ENCODE measurements at regions of chr7 and their contacts with region 1.

Region 1: GRCh38 chr7:116258734-116259133 is 48.4 kb downstream of the TES start:
- DNase-seq: no peak
- H3K4me3 ChIP-seq: no peak overlapping the region
- H3K27ac ChIP-seq: peak overlapping the region; percentile 48
- H3K4me1 ChIP-seq: peaks cover 5% of the 10 kb centered on the region
- H3K27me3 ChIP-seq: no peaks in the 10 kb centered on the region
- CTCF ChIP-seq: peak; percentile 78 to 92 (median 86)
- POLR2A ChIP-seq: no peak

Region 2: DNA sequence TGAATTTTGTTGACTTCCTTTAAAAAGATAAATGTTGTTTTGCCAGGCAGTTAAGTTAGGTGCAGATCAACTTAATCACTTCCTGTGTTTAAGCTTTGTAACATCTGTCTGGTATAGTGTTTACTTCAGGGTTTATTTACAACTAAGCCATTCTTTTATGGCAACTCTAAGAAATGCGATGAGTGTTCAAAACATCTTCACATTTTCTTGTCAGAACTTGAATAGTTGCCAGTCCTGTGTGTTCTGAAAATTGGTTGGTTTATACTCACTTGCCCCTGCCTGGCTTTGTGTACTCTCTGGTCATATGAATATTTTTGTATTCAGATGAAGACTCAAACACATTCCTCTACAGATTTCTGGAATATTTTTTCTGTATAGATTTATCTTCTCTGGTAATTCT is 1009.7 kb before region 1 on chr7:
- intact Hi-C with region 1: loop called (anchors 10 kb)
- DNase-seq: no peak
- H3K4me3 ChIP-seq: no peak overlapping the region
- H3K27ac ChIP-seq: no peak overlapping the region
- H3K4me1 ChIP-seq: no peaks in the 10 kb centered on the region
- H3K27me3 ChIP-seq: no peaks in the 10 kb centered on the region
- CTCF ChIP-seq: no peak
- POLR2A ChIP-seq: no peak

Region 3: GRCh38 chr7:116588641-116589594 is 330.2 kb after region 1 on chr7:
- intact Hi-C with region 1: loop called (anchors 5 kb)
- DNase-seq: no peak
- H3K4me3 ChIP-seq: no peak overlapping the region
- H3K27ac ChIP-seq: peak overlapping the region; percentile 8
- H3K4me1 ChIP-seq: peaks cover 29% of the 10 kb centered on the region
- H3K27me3 ChIP-seq: no peaks in the 10 kb centered on the region
- CTCF ChIP-seq: peak; percentile 43 to 79 (median 66)
- POLR2A ChIP-seq: no peak

Region 4: GRCh38 chr7:116715077-116715476 is 456.3 kb after region 1 on chr7:
- intact Hi-C with region 1: no loop called
- DNase-seq: no peak
- H3K4me3 ChIP-seq: no peak overlapping the region
- H3K27ac ChIP-seq: no peak overlapping the region
- H3K4me1 ChIP-seq: peaks cover 9% of the 10 kb centered on the region
- H3K27me3 ChIP-seq: no peaks in the 10 kb centered on the region
- CTCF ChIP-seq: no peak
- POLR2A ChIP-seq: no peak

Measured in vagina (tissue), 2 donors.